ENCODE measurements at regions of chr2 and their contacts with region 1.

Region 1: GRCh38 chr2:42095923-42096408 is 48.1 kb downstream of the PKDCC start:
- DNase-seq: no peak

Region 2: DNA sequence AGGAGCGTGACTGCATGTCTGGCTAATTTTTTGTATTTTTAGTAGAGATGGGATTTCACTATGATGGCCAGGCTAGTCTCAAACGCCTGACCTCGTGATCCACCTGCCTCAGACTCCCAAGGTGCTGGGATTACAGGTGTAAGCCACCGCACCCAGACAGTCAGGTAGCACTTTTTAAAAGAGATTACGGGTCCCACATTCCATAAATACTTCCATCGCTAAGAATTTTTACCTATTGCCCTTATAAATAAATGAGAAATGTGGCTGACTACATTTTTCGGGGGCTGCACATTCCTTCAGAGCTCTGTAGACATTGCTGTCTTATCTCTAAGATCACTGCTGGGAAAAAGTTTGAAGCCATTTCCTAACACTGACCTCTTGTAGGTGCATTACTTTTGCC is 426.4 kb before region 1 on chr2:
- intact Hi-C with region 1: no loop called
- DNase-seq: no peak

Region 3: GRCh38 chr2:42132966-42133641 is 37.1 kb after region 1 on chr2:
- intact Hi-C with region 1: no loop called
- DNase-seq: peak; percentile 88

Region 4: GRCh38 chr2:42169100-42169873 is 73.3 kb after region 1 on chr2 and contains the start of gene EML4:
- intact Hi-C with region 1: loop called (anchors 2 kb)
- DNase-seq: peak; percentile 96
- total RNA-seq, gene EML4: 7.9 TPM

Region 5: DNA sequence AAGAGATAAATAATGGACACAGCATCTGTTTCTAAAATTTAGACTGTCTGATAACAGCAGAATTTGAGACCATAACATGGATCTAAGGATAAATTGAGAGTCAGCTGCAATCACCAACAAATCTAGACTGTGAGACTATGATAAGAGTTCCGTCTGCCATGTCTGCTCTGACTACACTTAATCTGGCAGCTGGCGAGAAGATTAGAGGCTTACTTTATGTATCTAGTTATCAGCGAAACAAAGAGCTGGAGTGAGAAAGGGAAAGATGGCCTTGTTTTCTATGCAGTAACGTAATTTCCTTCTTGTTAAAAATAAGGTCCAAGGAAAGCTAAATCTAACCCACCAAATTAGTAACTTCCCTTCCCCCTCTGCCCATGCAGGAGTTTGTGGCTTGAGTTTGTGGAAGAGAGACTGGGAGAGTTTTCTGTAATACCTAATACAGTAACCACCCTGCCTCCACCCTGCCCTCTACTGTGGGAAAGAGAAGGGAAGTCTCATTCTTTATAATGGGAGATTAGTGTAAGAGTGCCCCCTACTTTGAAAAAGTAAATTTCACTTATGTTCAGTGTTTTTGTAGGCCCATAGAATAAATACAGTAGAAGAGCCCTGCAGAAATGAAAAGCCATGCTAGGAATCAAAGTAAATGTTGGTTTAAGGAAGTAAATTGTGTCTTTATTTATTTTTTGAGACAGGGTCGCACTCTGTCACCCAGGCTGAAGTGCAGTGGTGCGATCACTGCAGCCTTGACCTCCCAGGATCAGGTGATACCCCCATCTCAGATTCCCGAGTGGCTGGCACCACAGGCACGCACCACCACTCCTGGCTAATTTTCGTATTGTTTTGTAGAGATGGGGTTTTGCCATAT is 100.7 kb after region 1 on chr2:
- intact Hi-C with region 1: loop called (anchors 1 kb)
- DNase-seq: no peak

Region 6: DNA sequence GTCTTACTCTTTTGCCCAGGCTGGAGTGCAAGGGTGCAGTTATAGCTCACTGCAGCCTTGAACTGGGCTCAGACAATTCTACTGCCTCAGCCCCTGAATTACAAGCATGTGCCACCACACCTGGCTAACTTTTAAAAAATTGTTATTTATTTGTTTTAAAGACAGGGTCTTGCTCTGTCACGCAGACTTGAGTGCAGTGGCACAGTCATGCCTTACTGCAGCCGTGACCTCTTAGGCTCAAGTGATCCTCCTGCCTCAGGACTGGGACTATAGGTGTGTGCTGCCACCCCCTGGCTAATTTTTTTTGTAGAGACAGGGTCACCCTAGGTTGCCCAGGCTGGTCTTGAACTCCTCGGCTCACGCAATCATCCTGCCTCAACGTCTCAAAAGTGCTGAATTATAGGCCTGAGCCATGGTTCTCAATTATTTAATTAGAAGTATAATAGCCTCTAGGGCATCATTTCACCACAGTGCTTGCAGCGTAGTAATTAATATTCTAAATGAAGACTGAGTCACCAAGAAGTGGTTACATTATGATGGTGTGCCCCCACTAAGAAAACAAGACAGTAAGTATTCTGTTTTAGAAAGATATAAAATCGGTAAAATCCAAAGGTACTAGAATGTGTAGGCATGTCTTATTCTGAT is 142.8 kb after region 1 on chr2:
- intact Hi-C with region 1: loop called (anchors 2 kb)
- DNase-seq: no peak

Region 7: GRCh38 chr2:42328148-42328833 is 232.3 kb after region 1 on chr2:
- intact Hi-C with region 1: loop called (anchors 5 kb)
- DNase-seq: no peak

Region 8: GRCh38 chr2:42360890-42361727 is 265.1 kb after region 1 on chr2 and contains the start of gene COX7A2L:
- intact Hi-C with region 1: loop called (anchors 2 kb)
- DNase-seq: peak; percentile 99
- total RNA-seq, gene COX7A2L: 94.6 TPM

Region 9: DNA sequence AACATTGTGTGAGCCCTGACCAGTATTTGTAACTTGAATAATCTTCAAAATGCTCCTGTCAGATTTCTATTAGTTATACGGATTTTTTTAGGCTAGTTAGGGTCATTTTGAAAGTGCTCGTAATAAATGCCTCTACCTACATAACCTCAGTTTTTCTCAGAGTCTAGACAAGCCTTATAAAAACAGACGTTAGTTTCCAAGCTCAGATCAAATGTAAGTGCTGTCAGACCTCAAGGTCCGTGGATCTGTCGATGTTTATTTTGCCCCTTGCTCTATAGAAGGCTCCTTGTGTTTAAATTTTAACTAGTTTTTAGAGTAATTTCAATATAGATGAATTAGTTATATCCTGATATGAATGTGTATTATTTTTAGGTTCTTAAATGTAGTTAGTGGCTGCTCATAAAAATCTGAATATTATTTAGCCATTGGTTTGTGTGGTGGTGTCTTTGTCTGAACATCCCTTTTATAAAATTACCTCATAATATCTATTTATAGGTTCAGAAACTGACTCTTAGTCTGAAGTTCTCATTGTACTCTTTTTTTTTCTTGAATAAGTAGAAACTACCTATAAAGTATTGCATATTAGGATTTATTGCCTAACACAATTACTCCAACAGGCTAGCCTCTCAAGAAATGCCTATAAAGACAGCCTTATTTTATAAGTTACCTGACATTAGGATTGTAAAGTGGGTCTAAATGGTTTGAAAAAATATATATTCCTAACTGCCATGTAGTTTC is 543.5 kb after region 1 on chr2:
- intact Hi-C with region 1: no loop called
- DNase-seq: no peak

Measured in cardiac septum (tissue), 1 donor.